MCF 10A (cell line): ENCODE measurements at regions of chr2 and their contacts with region 1.

Region 1: GRCh38 chr2:10452956-10453904 is 5.1 kb upstream of the ODC1 start:
- DNase-seq: no peak
- H3K4me3 Mint-ChIP-seq: peak overlapping the region; percentile 23
- H3K27ac Mint-ChIP-seq: peak overlapping the region; percentile 72
- H3K4me1 Mint-ChIP-seq: peaks cover 41% of the 10 kb centered on the region
- H3K27me3 Mint-ChIP-seq: no peaks in the 10 kb centered on the region
- CTCF ChIP-seq: no peak

Region 2: GRCh38 chr2:10514743-10515142 is 61.5 kb after region 1 on chr2:
- CTCF ChIA-PET with region 1: no interaction called
- POLR2A ChIA-PET with region 1: interaction called, 7 read pairs
- intact Hi-C with region 1: loop called (anchors 1 kb)
- DNase-seq: peak; percentile 97
- H3K4me3 Mint-ChIP-seq: peak overlapping the region; percentile 38
- H3K27ac Mint-ChIP-seq: peak overlapping the region; percentile 87
- H3K4me1 Mint-ChIP-seq: peaks cover 10% of the 10 kb centered on the region
- H3K27me3 Mint-ChIP-seq: no peaks in the 10 kb centered on the region
- CTCF ChIP-seq: no peak

Region 3: DNA sequence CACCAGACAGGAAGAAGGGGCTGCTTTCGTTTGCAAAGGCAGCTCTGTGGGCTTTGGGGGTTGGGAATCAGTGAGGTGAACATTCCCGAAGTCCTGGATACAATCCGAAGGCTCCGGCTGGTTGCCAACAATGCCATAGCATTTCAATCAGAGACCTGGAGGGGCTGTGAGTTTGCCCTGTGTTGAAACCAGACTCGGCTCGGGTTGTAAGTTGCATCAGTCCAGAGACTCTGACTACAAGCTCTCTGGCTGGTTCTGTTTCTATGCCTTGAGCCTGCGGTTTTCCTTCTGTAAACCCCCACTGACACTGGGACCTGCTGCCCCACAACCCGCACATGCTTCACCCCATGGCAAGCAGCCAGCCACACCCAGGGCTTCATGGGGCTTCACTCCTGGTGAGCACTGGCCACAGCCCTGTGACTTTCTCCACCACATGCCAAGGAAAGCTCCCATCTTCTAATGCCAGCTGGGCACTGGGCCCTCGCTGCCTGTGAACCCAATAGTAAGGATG is 80.6 kb after region 1 on chr2:
- CTCF ChIA-PET with region 1: no interaction called
- POLR2A ChIA-PET with region 1: interaction called, 3 read pairs
- intact Hi-C with region 1: loop called (anchors 2 kb)
- DNase-seq: peak; percentile 97
- H3K4me3 Mint-ChIP-seq: no peak overlapping the region
- H3K27ac Mint-ChIP-seq: no peak overlapping the region
- H3K4me1 Mint-ChIP-seq: peaks cover 22% of the 10 kb centered on the region
- H3K27me3 Mint-ChIP-seq: no peaks in the 10 kb centered on the region
- CTCF ChIP-seq: no peak